Mammary epithelial cell (primary cell): ENCODE measurements at regions of chrX and their contacts with region 1.

Region 1: DNA sequence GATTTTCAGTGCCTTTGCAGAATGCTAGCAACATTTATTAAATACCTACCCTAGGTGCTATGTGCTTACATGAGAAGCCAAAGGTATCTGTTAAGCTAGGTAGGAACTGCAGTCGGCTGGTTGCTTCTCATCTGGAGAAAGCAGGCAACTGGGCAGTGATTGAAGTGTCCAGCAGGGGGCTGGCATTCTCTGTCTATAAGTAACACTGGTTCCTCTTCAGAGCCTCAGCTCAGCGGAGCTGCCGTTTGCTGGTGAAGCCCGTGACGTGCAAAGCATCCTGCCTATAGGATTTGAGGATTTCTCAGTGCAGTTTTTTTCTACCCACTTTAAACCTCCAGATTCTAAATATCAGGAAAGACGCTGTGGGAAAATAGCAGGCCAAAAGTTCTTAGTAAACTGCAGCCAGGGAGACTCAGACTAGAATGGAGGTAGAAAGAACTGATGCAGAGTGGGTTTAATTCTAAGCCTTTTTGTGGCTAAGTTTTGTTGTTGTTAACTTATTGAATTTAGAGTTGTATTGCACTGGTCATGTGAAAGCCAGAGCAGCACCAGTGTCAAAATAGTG is at the start of gene GRPR:
- DNase-seq: peak; percentile 80
- H3K4me3 ChIP-seq: no peak within 1 kb of the TSS
- H3K27ac ChIP-seq: no peak within 1 kb of the TSS
- H3K4me1 ChIP-seq: peaks cover 6% of the 10 kb centered on the region
- H3K27me3 ChIP-seq: no peaks in the 10 kb centered on the region
- CTCF ChIP-seq: peak; percentile 92 to 94
- total RNA-seq, gene GRPR: 0.14 to 0.17 TPM

Region 2: GRCh38 chrX:15425024-15425423 is 698.3 kb before region 1 on chrX:
- CTCF ChIA-PET with region 1: no interaction called
- dilution Hi-C with region 1: no loop called
- in situ Hi-C with region 1: no loop called
- intact Hi-C with region 1: loop called (anchors 10 kb)
- DNase-seq: peak; percentile 16
- H3K4me3 ChIP-seq: no peak overlapping the region
- H3K27ac ChIP-seq: no peak overlapping the region
- H3K4me1 ChIP-seq: no peaks in the 10 kb centered on the region
- H3K27me3 ChIP-seq: no peaks in the 10 kb centered on the region
- CTCF ChIP-seq: no peak

Region 3: GRCh38 chrX:15930585-15930984 is 192.7 kb before region 1 on chrX:
- CTCF ChIA-PET with region 1: interaction called, 3 read pairs
- dilution Hi-C with region 1: no loop called
- in situ Hi-C with region 1: no loop called
- intact Hi-C with region 1: loop called (anchors 1 kb)
- DNase-seq: peak; percentile 45
- H3K4me3 ChIP-seq: no peak overlapping the region
- H3K27ac ChIP-seq: no peak overlapping the region
- H3K4me1 ChIP-seq: no peaks in the 10 kb centered on the region
- H3K27me3 ChIP-seq: peaks cover 1% of the 10 kb centered on the region
- CTCF ChIP-seq: peak; percentile 36 to 65

Region 4: GRCh38 chrX:16096141-16096540 is 27.2 kb before region 1 on chrX:
- CTCF ChIA-PET with region 1: no interaction called
- dilution Hi-C with region 1: no loop called
- in situ Hi-C with region 1: no loop called
- intact Hi-C with region 1: no loop called
- DNase-seq: no peak
- H3K4me3 ChIP-seq: no peak overlapping the region
- H3K27ac ChIP-seq: no peak overlapping the region
- H3K4me1 ChIP-seq: no peaks in the 10 kb centered on the region
- H3K27me3 ChIP-seq: no peaks in the 10 kb centered on the region
- CTCF ChIP-seq: no peak

Region 5: GRCh38 chrX:16282193-16282592 is 158.9 kb after region 1 on chrX:
- CTCF ChIA-PET with region 1: no interaction called
- dilution Hi-C with region 1: no loop called
- in situ Hi-C with region 1: no loop called
- intact Hi-C with region 1: loop called (anchors 1 kb)
- DNase-seq: no peak
- H3K4me3 ChIP-seq: no peak overlapping the region
- H3K27ac ChIP-seq: no peak overlapping the region
- H3K4me1 ChIP-seq: no peaks in the 10 kb centered on the region
- H3K27me3 ChIP-seq: peaks cover 2% of the 10 kb centered on the region
- CTCF ChIP-seq: peak in 1 of 2 donors; percentile 15

Region 6: DNA sequence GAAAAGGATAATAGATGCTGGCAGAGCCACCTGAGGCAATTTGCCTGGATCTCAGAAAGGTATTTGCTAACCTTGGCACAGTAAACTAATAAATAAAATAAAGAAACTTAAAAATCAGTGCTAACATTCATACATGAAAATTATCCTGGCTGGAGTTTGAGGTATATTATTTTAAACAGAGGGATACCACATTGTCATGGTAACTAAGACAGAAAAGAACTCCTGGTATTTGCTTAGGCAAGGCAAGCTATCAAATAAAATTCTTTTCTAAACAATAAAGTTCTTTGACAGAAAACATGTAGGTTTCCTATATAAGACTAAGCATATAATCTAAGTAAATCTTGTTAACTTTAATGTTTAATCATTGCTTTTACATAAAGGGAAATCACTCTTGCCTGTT is 262.8 kb after region 1 on chrX:
- CTCF ChIA-PET with region 1: no interaction called
- dilution Hi-C with region 1: no loop called
- in situ Hi-C with region 1: no loop called
- intact Hi-C with region 1: no loop called
- DNase-seq: no peak
- H3K4me3 ChIP-seq: no peak overlapping the region
- H3K27ac ChIP-seq: no peak overlapping the region
- H3K4me1 ChIP-seq: no peaks in the 10 kb centered on the region
- H3K27me3 ChIP-seq: peaks cover 10% of the 10 kb centered on the region
- CTCF ChIP-seq: no peak

Region 7: GRCh38 chrX:16436348-16437188 is 313.3 kb after region 1 on chrX:
- CTCF ChIA-PET with region 1: no interaction called
- dilution Hi-C with region 1: no loop called
- in situ Hi-C with region 1: loop called in 1 of 2 experiments (anchors 10 kb)
- intact Hi-C with region 1: loop called (anchors 1 kb)
- DNase-seq: peak; percentile 61
- H3K4me3 ChIP-seq: no peak overlapping the region
- H3K27ac ChIP-seq: no peak overlapping the region
- H3K4me1 ChIP-seq: no peaks in the 10 kb centered on the region
- H3K27me3 ChIP-seq: no peaks in the 10 kb centered on the region
- CTCF ChIP-seq: peak; percentile 69 to 84

Region 8: GRCh38 chrX:16670998-16671397 is 547.7 kb after region 1 on chrX:
- CTCF ChIA-PET with region 1: interaction called, 4 read pairs
- dilution Hi-C with region 1: no loop called
- in situ Hi-C with region 1: loop called in 1 of 2 experiments (anchors 25 kb)
- intact Hi-C with region 1: no loop called
- DNase-seq: peak; percentile 25
- H3K4me3 ChIP-seq: no peak overlapping the region
- H3K27ac ChIP-seq: no peak overlapping the region
- H3K4me1 ChIP-seq: no peaks in the 10 kb centered on the region
- H3K27me3 ChIP-seq: no peaks in the 10 kb centered on the region
- CTCF ChIP-seq: peak; percentile 41 to 53

Region 9: GRCh38 chrX:16695079-16695676 is 571.9 kb after region 1 on chrX:
- CTCF ChIA-PET with region 1: interaction called, 5 read pairs
- dilution Hi-C with region 1: no loop called
- in situ Hi-C with region 1: no loop called
- intact Hi-C with region 1: loop called (anchors 1 kb)
- DNase-seq: peak; percentile 32
- H3K4me3 ChIP-seq: no peak overlapping the region
- H3K27ac ChIP-seq: no peak overlapping the region
- H3K4me1 ChIP-seq: no peaks in the 10 kb centered on the region
- H3K27me3 ChIP-seq: no peaks in the 10 kb centered on the region
- CTCF ChIP-seq: peak; percentile 93 to 97